Caco-2 (cell line): ENCODE measurements at regions of chr5 and their contacts with region 1.

Region 1: GRCh38 chr5:160439205-160439600 is 17.5 kb downstream of the PTTG1 start:
- DNase-seq: peak; percentile 84 to 90
- H3K4me3 ChIP-seq: peak overlapping the region; percentile 23
- H3K4me3 Mint-ChIP-seq: peak overlapping the region; percentile 66
- H3K27ac Mint-ChIP-seq: no peak overlapping the region
- H3K4me1 ChIP-seq: no peaks in the 10 kb centered on the region; the same call in 1 of the 2 replicates
- H3K4me1 Mint-ChIP-seq: peaks cover 6% of the 10 kb centered on the region
- H3K27me3 ChIP-seq: no peaks in the 10 kb centered on the region
- H3K27me3 Mint-ChIP-seq: no peaks in the 10 kb centered on the region
- CTCF ChIP-seq: peak; percentile 89 to 91

Region 2: DNA sequence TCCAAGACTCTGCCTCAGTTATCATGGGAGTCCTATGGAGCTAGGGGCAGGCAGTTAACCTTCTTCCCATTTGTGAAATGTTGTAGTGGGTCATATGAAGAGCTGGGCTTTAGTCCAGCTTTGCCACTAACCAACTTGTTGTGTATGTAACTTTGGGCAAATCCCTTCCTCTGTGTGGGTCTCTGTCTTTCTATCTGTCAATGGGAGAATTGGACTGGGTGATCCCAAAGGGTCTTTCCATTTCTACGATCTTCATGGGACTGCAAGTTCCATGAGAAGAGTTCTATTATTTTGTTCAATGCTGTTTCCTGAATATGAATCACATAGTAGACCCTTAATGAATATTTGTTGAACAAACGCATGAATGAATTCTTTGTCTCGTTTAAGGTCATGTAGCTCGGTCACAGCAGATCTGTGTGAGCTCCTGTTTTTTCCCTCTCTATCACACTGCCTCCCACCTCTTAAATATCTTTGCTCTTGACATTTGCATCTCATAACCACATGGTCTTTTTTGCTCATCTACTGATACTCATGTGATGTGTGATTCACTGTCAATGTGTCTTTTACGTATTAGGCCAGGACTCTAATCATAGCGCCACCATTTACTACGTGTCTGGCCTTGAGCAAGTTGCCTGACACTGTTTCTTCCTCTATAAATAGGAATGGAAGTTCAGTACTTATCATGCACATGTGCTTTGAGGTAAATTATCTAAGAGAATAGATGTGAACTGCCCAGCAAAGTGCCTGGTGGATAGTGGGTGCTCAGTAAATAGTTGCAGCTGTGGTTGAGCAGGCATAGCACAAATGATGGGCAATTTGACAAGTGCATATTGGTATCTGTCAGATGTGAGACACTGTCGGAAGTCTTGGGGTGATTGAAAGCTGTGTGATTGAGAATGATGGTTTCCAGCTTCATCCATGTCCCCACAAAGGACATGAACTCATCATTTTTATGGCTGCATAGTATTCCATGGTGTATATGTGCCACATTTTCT is 19.9 kb after region 1 on chr5:
- CTCF ChIA-PET with region 1: interaction called, 43 read pairs
- POLR2A ChIA-PET with region 1: no interaction called
- intact Hi-C with region 1: loop called (anchors 1 kb)
- DNase-seq: no peak
- H3K4me3 ChIP-seq: no peak overlapping the region
- H3K4me3 Mint-ChIP-seq: no peak overlapping the region
- H3K27ac Mint-ChIP-seq: no peak overlapping the region
- H3K4me1 ChIP-seq: peaks cover 23% of the 10 kb centered on the region
- H3K4me1 Mint-ChIP-seq: peaks cover 18% of the 10 kb centered on the region
- H3K27me3 ChIP-seq: no peaks in the 10 kb centered on the region
- H3K27me3 Mint-ChIP-seq: no peaks in the 10 kb centered on the region
- CTCF ChIP-seq: no peak

Region 3: GRCh38 chr5:160479926-160480325 is 40.7 kb after region 1 on chr5:
- CTCF ChIA-PET with region 1: interaction called, 7 read pairs
- POLR2A ChIA-PET with region 1: no interaction called
- intact Hi-C with region 1: loop called (anchors 5 kb)
- DNase-seq: no peak
- H3K4me3 ChIP-seq: no peak overlapping the region
- H3K4me3 Mint-ChIP-seq: no peak overlapping the region
- H3K27ac Mint-ChIP-seq: no peak overlapping the region
- H3K4me1 ChIP-seq: peaks cover 64% of the 10 kb centered on the region
- H3K4me1 Mint-ChIP-seq: peaks cover 43% of the 10 kb centered on the region
- H3K27me3 ChIP-seq: no peaks in the 10 kb centered on the region
- H3K27me3 Mint-ChIP-seq: no peaks in the 10 kb centered on the region
- CTCF ChIP-seq: no peak

Region 4: GRCh38 chr5:160638161-160638742 is 199.0 kb after region 1 on chr5:
- CTCF ChIA-PET with region 1: no interaction called
- POLR2A ChIA-PET with region 1: no interaction called
- intact Hi-C with region 1: loop called (anchors 10 kb)
- DNase-seq: no peak
- H3K4me3 ChIP-seq: no peak overlapping the region
- H3K4me3 Mint-ChIP-seq: no peak overlapping the region
- H3K27ac Mint-ChIP-seq: no peak overlapping the region
- H3K4me1 ChIP-seq: peaks cover 12% of the 10 kb centered on the region; the same call in 1 of the 2 replicates
- H3K4me1 Mint-ChIP-seq: peaks cover 20% of the 10 kb centered on the region
- H3K27me3 ChIP-seq: no peaks in the 10 kb centered on the region; the same call in 1 of the 2 replicates
- H3K27me3 Mint-ChIP-seq: no peaks in the 10 kb centered on the region
- CTCF ChIP-seq: no peak

Region 5: GRCh38 chr5:160685695-160686094 is 246.5 kb after region 1 on chr5:
- CTCF ChIA-PET with region 1: no interaction called
- POLR2A ChIA-PET with region 1: no interaction called
- intact Hi-C with region 1: loop called (anchors 2 kb)
- DNase-seq: peak in 1 of 2 experiments; percentile 66
- H3K4me3 ChIP-seq: no peak overlapping the region
- H3K4me3 Mint-ChIP-seq: no peak overlapping the region
- H3K27ac Mint-ChIP-seq: no peak overlapping the region
- H3K4me1 ChIP-seq: no peaks in the 10 kb centered on the region
- H3K4me1 Mint-ChIP-seq: peaks cover 8% of the 10 kb centered on the region
- H3K27me3 ChIP-seq: no peaks in the 10 kb centered on the region
- H3K27me3 Mint-ChIP-seq: no peaks in the 10 kb centered on the region
- CTCF ChIP-seq: peak; percentile 76 to 79